WTC11 (cell line): ENCODE measurements at regions of chr2 and their contacts with region 1.

Region 1: GRCh38 chr2:101036562-101037457 is 34.7 kb downstream of the RPL31 start:
- DNase-seq: no peak
- ATAC-seq: no peak
- H3K4me3 Mint-ChIP-seq: no peak overlapping the region
- H3K27ac Mint-ChIP-seq: peak overlapping the region; percentile 37
- H3K4me1 Mint-ChIP-seq: peaks cover 7% of the 10 kb centered on the region
- H3K27me3 Mint-ChIP-seq: no peaks in the 10 kb centered on the region
- CTCF ChIP-seq: 0 out of 2 replicates have a peak, but pooled peaks have one; percentile 9

Region 2: DNA sequence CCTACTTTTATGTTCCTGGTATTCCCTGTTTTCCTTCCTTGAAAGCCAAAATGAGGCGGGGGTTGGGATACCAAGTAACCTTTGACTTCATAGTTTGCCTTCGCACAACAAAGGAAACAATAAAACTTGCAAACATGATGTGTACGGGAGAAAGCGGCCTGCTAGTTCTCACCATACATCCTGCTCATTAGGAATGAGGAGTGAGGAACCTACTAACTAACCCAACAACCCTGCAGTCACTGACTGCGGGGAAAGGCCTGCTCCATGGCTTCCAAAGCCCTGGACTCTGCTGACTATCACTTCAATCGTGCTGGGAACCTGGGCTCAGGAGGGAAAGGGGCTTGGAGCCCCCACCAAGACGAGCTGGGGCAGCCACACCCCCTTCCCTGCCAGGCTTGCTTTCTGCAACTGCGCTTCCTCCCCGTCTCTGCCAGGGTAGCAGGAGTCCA is 10.5 kb before region 1 on chr2:
- CTCF ChIA-PET with region 1: interaction called, 10 read pairs
- POLR2A ChIA-PET with region 1: no interaction called
- DNase-seq: no peak
- ATAC-seq: peak; percentile 68
- H3K4me3 Mint-ChIP-seq: no peak overlapping the region
- H3K27ac Mint-ChIP-seq: peak overlapping the region; percentile 73
- H3K4me1 Mint-ChIP-seq: peaks cover 15% of the 10 kb centered on the region
- H3K27me3 Mint-ChIP-seq: no peaks in the 10 kb centered on the region
- CTCF ChIP-seq: no peak

Region 3: DNA sequence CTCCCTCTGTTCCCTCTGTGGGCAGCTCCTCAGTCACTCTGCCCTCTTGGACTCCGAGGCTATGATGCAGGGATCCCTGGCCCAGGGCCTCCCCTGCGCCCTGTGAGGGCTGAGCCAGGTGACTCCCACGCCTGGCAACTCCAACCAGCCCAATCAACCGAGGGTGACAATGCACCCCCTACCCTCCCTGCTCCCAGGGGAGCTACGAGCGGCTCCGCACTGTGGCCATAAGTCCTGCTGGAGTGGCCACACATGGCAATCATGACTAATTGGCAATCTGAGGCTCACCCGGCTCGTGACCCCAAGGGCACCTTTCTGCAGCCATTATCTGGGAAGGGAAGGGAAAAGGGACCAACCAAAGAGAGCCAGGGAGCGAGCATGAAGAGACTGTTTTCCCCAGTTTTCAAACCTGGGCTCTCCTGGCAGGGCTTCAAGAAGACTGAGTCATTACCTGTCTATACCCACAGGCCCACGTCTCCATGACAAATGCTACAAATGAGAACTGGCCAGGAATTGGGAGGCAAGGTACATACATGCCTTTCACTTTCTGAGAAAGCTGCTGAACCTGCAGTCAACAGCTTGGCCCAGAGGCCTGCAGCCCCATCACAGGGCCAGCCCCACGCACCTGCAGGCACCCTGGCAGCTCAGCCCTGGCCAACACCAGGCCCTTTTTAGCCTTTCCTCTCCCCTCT is 10.4 kb after region 1 on chr2:
- CTCF ChIA-PET with region 1: interaction called, 11 read pairs
- POLR2A ChIA-PET with region 1: no interaction called
- DNase-seq: no peak
- ATAC-seq: peak; percentile 23; the same call in 1 of the 2 replicates
- H3K4me3 Mint-ChIP-seq: no peak overlapping the region
- H3K27ac Mint-ChIP-seq: no peak overlapping the region
- H3K4me1 Mint-ChIP-seq: peaks cover 32% of the 10 kb centered on the region
- H3K27me3 Mint-ChIP-seq: no peaks in the 10 kb centered on the region
- CTCF ChIP-seq: no peak

Region 4: DNA sequence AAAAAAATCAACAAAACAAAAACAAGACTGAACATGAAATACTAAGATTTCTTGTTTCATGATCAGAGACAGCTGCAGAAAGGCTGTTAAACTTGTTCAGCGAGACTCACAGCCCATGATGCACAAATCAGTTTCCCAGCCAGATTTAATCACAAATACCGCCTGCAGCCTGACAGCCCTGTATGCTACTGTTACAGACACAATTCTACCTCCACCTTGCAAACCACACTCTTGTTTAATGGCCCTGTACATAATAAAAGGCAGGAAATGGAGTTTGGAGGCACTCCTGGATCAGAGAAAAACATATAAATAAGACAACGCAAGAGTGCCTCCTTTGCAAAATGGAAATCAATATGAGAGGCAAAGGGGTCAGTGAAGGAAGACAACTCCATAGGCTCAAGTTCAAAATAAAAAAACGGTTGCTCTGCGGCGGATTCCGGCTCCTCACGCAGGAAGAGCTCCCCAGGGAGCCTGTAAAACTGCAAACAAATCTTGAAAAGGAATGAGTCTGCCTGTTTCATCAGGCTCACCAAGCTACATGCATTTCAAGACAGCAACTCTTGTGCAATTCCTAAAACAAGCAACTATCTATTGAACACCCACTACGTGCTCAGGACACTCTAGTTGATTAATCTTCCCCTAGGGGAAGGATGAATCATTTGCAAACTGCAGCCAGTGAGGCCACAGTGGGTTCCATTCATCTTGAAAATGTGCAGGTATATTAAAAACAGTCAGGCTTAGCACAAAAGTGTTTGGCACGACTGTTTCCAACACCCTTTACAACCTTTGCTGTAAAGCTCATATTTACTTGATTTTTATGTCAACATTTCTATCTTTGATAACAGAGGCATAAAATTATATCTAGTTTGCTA is 76.8 kb after region 1 on chr2:
- CTCF ChIA-PET with region 1: interaction called, 10 read pairs
- POLR2A ChIA-PET with region 1: no interaction called
- DNase-seq: peak; percentile 30
- ATAC-seq: peak; percentile 80
- H3K4me3 Mint-ChIP-seq: peak overlapping the region; percentile 55
- H3K27ac Mint-ChIP-seq: peak overlapping the region; percentile 87
- H3K4me1 Mint-ChIP-seq: peaks cover 80% of the 10 kb centered on the region
- H3K27me3 Mint-ChIP-seq: no peaks in the 10 kb centered on the region
- CTCF ChIP-seq: no peak

Region 5: DNA sequence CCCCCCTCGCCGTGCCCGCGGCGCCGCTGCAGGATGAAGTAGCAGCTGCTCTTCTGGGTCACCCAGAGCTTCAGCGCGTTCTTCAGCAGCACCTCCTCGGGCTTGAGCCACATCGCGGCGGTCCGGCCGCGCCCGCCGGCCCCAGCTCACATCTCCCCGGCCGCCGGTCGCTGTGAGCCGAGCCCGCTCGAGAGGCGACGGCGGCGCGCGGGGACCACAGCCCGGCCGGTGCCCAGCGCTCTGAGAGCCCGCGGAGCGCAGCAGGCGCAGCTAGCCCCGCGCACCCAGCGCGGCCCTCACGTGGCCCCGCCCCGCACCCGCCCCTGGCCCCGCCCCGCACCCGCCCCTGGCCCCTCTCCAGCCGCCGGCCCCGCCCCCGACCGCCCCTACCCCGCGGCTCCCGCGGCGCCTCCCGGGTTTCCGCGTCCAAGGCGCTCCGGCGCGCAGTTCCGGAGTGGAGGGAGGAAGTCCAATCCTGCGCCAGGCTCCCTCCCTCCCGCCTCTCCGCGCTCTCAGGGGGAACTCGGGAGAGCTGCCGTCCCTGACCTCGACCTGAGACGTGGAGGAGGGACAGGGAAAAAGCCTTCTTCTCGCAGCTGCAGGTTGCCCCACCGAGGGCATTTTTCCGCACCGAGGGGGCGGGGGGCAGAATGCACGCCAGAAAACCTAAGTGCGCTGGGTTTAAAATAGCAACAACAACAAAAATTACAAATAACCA is 114.5 kb after region 1 on chr2 and contains the start of gene TBC1D8:
- CTCF ChIA-PET with region 1: interaction called, 102 read pairs
- POLR2A ChIA-PET with region 1: interaction called, 3 read pairs
- DNase-seq: peak; percentile 89
- ATAC-seq: peak; percentile 63
- H3K4me3 Mint-ChIP-seq: peak within 1 kb of the TSS; percentile 77
- H3K27ac Mint-ChIP-seq: peak within 1 kb of the TSS; percentile 51; the same call in 1 of the 2 replicates
- H3K4me1 Mint-ChIP-seq: peaks cover 62% of the 10 kb centered on the region
- H3K27me3 Mint-ChIP-seq: peaks cover 9% of the 10 kb centered on the region
- CTCF ChIP-seq: no peak
- total RNA-seq, gene TBC1D8: 30.3 to 51.7 TPM (median 32.0 TPM) in 3 replicates

Region 6: DNA sequence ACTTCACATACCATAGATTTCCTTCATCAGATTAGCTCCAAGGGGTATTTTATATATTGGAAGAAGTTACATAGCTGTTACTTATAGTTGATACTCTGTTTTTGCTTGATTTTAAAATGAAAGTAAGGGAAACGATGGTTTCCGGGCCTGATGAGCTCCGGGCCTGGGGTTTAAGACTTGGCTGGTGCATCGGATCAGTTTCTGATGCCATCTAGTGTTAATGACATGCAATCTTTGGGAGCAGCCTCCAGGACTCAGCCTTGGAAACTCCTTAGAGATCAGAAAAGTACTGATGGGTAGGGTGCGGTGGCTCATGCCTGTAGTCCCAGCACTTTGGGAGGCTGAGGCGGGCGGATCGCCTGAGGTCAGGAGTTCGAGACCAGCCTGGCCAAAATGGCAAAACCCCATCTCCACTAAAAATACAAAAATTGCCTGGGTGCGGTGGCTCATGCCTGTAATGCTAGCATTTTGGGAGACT is 168.8 kb after region 1 on chr2:
- CTCF ChIA-PET with region 1: interaction called, 21 read pairs
- POLR2A ChIA-PET with region 1: no interaction called
- DNase-seq: peak; percentile 41
- ATAC-seq: peak; percentile 99
- H3K4me3 Mint-ChIP-seq: no peak overlapping the region
- H3K27ac Mint-ChIP-seq: no peak overlapping the region
- H3K4me1 Mint-ChIP-seq: peaks cover 10% of the 10 kb centered on the region
- H3K27me3 Mint-ChIP-seq: 0 out of 2 replicates have a peak, but pooled peaks cover under 1% of the 10 kb centered on the region
- CTCF ChIP-seq: no peak

Region 7: GRCh38 chr2:101223814-101224231 is 187.0 kb after region 1 on chr2:
- CTCF ChIA-PET with region 1: interaction called, 11 read pairs
- POLR2A ChIA-PET with region 1: no interaction called
- DNase-seq: no peak
- ATAC-seq: no peak
- H3K4me3 Mint-ChIP-seq: no peak overlapping the region
- H3K27ac Mint-ChIP-seq: no peak overlapping the region
- H3K4me1 Mint-ChIP-seq: no peaks in the 10 kb centered on the region
- H3K27me3 Mint-ChIP-seq: no peaks in the 10 kb centered on the region; the same call in 1 of the 2 replicates
- CTCF ChIP-seq: no peak